Aorta (tissue), 5 donors: ENCODE measurements at regions of chr6 and their contacts with region 1.

Region 1: DNA sequence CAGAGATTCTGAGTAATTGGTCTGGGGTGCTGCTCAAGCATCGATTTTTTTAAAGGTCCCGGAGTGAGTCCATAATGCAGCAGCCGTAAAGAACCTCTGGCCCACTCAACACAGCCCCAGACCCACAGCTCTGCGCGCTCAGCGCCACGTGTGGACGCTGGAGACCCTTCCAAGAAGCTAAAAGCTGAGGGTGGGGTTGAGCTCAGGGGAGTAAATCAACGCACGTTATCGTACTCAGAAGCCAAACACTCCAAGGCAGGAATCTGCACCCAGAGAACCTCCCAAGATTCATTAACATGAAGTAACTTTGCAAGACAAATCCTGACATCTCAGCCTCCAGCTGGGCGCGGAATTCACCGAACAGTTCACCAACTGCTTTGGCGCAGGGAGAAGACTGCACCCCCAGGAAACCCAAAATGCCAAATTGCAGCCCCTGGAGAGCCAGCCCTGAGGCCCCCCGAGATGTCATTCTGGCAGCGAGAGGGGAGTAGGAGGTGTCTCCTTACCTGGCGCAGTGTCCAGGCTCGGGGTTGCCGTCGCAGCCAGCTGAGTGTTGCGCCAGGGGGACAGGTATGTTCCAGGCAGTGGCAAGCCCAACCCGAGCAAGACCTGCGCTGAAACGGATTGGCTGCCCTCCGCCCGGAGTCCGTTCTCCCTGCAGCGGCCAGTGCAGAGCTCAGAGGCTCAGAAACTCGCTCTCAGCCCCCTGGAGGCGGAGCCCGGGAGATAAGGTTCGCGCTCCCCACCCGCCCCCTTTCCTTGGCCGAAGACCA is at the start of gene COL21A1:
- DNase-seq: peak; percentile 85 to 92
- ATAC-seq: peak; percentile 89
- H3K4me3 ChIP-seq: peak within 1 kb of the TSS; percentile 65 to 80
- H3K27ac ChIP-seq: peak within 1 kb of the TSS; percentile 78 to 87
- H3K4me1 ChIP-seq: peaks cover 0 to 7% of the 10 kb centered on the region in 2 donors
- H3K27me3 ChIP-seq: no peaks in the 10 kb centered on the region
- total RNA-seq, gene COL21A1: 22.5 to 39.3 TPM

Region 2: GRCh38 chr6:56072856-56073255 is 174.2 kb before region 1 on chr6:
- intact Hi-C with region 1: loop called in 1 of 2 experiments (anchors 10 kb)
- DNase-seq: no peak
- ATAC-seq: peak; percentile 29
- H3K4me3 ChIP-seq: no peak overlapping the region
- H3K27ac ChIP-seq: peak overlapping the region; percentile 70 to 94
- H3K4me1 ChIP-seq: peaks cover 2 to 5% of the 10 kb centered on the region in 2 donors
- H3K27me3 ChIP-seq: no peaks in the 10 kb centered on the region

Region 3: GRCh38 chr6:56091159-56091869 is 155.8 kb before region 1 on chr6:
- intact Hi-C with region 1: loop called in 1 of 2 experiments (anchors 10 kb)
- DNase-seq: no peak
- ATAC-seq: peak; percentile 68
- H3K4me3 ChIP-seq: peak overlapping the region in 1 of 2 donors; percentile 6
- H3K27ac ChIP-seq: peak overlapping the region; percentile 43 to 97
- H3K4me1 ChIP-seq: peaks cover 3 to 5% of the 10 kb centered on the region in 2 donors
- H3K27me3 ChIP-seq: no peaks in the 10 kb centered on the region